Gastrocnemius medialis (tissue), 4 donors: ENCODE measurements at regions of chr9 and their contacts with region 1.

Region 1: GRCh38 chr9:75451505-75451904 is 363.2 kb downstream of the OSTF1 start:
- DNase-seq: peak in 1 of 2 donors; percentile 29
- ATAC-seq: peak in 1 of 2 donors; percentile 24
- H3K4me3 ChIP-seq: no peak overlapping the region
- H3K27ac ChIP-seq: peak overlapping the region; percentile 12 to 55 (median 43)
- H3K4me1 ChIP-seq: peaks cover 0 to 6% of the 10 kb centered on the region in 2 donors
- H3K27me3 ChIP-seq: no peaks in the 10 kb centered on the region
- CTCF ChIP-seq: no peak
- POLR2A ChIP-seq: no peak

Region 2: GRCh38 chr9:75378036-75378435 is 73.5 kb before region 1 on chr9:
- in situ Hi-C with region 1: no loop called
- intact Hi-C with region 1: loop called (anchors 5 kb)
- DNase-seq: peak; percentile 36 to 77
- ATAC-seq: peak; percentile 51 to 70
- H3K4me3 ChIP-seq: no peak overlapping the region
- H3K27ac ChIP-seq: peak overlapping the region in 3 of 4 donors; percentile 38 to 55 (median 55)
- H3K4me1 ChIP-seq: no peaks in the 10 kb centered on the region
- H3K27me3 ChIP-seq: no peaks in the 10 kb centered on the region
- CTCF ChIP-seq: no peak
- POLR2A ChIP-seq: no peak